Left cardiac atrium (tissue), 4 donors: ENCODE measurements at regions of chr22 and their contacts with region 1.

Region 1: GRCh38 chr22:17910561-17911311 is 113.6 kb downstream of the MICAL3 start:
- DNase-seq: peak; percentile 86
- ATAC-seq: peak; percentile 89 to 91

Region 2: GRCh38 chr22:17867160-17867785 is 43.5 kb before region 1 on chr22:
- intact Hi-C with region 1: no loop called
- DNase-seq: peak; percentile 67
- ATAC-seq: peak; percentile 46 to 58

Region 3: DNA sequence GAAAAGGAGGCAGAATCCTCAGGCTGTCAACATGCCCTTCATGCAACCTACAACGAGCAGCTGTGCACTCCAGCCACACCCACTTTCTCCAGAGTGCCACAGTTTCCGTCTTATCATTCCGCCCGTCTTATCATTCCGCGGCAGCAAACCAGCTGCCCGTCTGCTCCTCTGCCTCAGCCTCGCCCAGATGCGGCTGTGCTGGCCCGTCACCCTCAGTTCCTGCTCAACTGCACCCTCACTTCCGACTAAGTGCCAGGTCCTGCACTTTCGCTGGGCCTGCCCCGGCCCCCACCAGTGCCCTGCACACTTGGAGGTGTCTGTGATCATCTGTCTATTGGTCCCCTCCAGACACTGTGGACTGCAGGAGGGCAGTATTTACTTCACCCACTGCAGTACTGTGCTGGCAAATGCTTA is 69.9 kb after region 1 on chr22:
- intact Hi-C with region 1: loop called in 1 of 2 experiments (anchors 10 kb)
- DNase-seq: peak; percentile 51
- ATAC-seq: peak; percentile 54 to 79

Region 4: GRCh38 chr22:18001040-18001893 is 90.5 kb after region 1 on chr22:
- intact Hi-C with region 1: loop called in 1 of 2 experiments (anchors 2 kb)
- DNase-seq: peak; percentile 91
- ATAC-seq: peak; percentile 96 to 98